A549 (cell line): ENCODE measurements at regions of chrX and their contacts with region 1.

Region 1: GRCh38 chrX:71068049-71068763 is at the start of gene SNX12:
- DNase-seq: peak; percentile 93 to 97
- ATAC-seq: peak; percentile 97 to 98
- H3K4me3 ChIP-seq: peak within 1 kb of the TSS; percentile 84
- H3K27ac ChIP-seq: peak within 1 kb of the TSS; percentile 91 to 94
- H3K4me1 ChIP-seq: peaks cover 5% of the 10 kb centered on the region; the same call in 1 of the 3 replicates
- CTCF ChIP-seq: no peak
- EP300 ChIP-seq: 0 out of 5 replicates have a peak, but pooled peaks of 1 of the 2 experiments have one; percentile 17
- POLR2A ChIP-seq: peak; percentile 53
- RAD21 ChIP-seq: no peak
- polyA plus RNA-seq, gene SNX12: 82.4 and 84.4 TPM in 2 replicates

Region 2: GRCh38 chrX:71118032-71118984 is 50.1 kb after region 1 on chrX and contains the start of gene MED12:
- CTCF ChIA-PET with region 1: interaction called, 3 read pairs
- POLR2A ChIA-PET with region 1: interaction called, 15 read pairs
- DNase-seq: peak; percentile 66 to 68
- ATAC-seq: peak; percentile 94 to 98
- H3K4me3 ChIP-seq: peak within 1 kb of the TSS; percentile 88
- H3K27ac ChIP-seq: peak within 1 kb of the TSS; percentile 98 to 99
- H3K4me1 ChIP-seq: peaks cover 8% of the 10 kb centered on the region; the same call in 2 of the 3 replicates
- CTCF ChIP-seq: no peak
- EP300 ChIP-seq: no peak
- POLR2A ChIP-seq: peak; percentile 61
- RAD21 ChIP-seq: no peak
- polyA plus RNA-seq, gene MED12: 12.6 and 35.0 TPM in 2 replicates